ENCODE measurements at regions of chr9 and their contacts with region 1.

Region 1: GRCh38 chr9:34899535-34900158 is 58.4 kb upstream of the PHF24 start:
- DNase-seq: peak; percentile 71 to 80
- H3K4me3 ChIP-seq: no peak overlapping the region
- H3K4me3 Mint-ChIP-seq: no peak overlapping the region
- H3K27ac Mint-ChIP-seq: no peak overlapping the region
- H3K4me1 ChIP-seq: no peaks in the 10 kb centered on the region
- H3K4me1 Mint-ChIP-seq: no peaks in the 10 kb centered on the region
- H3K27me3 ChIP-seq: no peaks in the 10 kb centered on the region; the same call in 1 of the 2 replicates
- H3K27me3 Mint-ChIP-seq: peaks cover 16% of the 10 kb centered on the region
- CTCF ChIP-seq: peak; percentile 81 to 88

Region 2: DNA sequence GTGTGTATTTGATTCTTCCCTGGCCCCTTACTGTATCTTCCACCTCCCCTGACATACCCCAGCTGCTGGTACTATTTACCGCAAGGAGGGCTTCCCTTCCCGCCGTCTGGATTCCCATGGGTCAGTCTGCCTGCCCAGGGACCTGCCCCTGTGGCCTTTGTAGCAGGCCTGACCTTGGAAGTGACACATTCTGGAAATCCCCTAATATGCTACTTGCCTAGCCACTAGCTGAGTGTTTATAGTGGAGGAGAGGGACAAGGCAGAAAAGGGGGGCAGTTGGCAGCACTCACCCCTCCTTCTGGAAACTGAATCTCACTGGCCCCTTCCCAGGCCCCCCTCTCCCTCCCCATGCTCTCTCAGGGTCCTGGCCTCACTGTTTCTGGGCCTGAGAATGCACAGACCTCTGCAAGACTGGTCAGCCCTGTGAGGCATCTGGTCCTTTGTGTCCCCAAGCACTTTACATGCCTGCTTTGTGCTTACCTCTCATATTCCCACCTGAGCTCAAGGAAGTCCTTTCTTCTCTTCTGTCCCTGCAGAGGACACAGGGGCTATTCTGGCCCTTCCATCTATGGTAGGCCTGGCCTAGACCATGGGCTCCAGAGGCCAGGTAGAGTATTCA is 181.5 kb before region 1 on chr9:
- CTCF ChIA-PET with region 1: no interaction called
- POLR2A ChIA-PET with region 1: no interaction called
- intact Hi-C with region 1: no loop called
- DNase-seq: no peak
- H3K4me3 ChIP-seq: no peak overlapping the region
- H3K4me3 Mint-ChIP-seq: no peak overlapping the region
- H3K27ac Mint-ChIP-seq: no peak overlapping the region
- H3K4me1 ChIP-seq: no peaks in the 10 kb centered on the region
- H3K4me1 Mint-ChIP-seq: no peaks in the 10 kb centered on the region
- H3K27me3 ChIP-seq: no peaks in the 10 kb centered on the region; the same call in 1 of the 2 replicates
- H3K27me3 Mint-ChIP-seq: peaks cover 20% of the 10 kb centered on the region
- CTCF ChIP-seq: no peak

Region 3: GRCh38 chr9:34957492-34958410 is 58.1 kb after region 1 on chr9 and contains the start of gene PHF24:
- CTCF ChIA-PET with region 1: interaction called, 3 read pairs
- POLR2A ChIA-PET with region 1: no interaction called
- intact Hi-C with region 1: loop called (anchors 1 kb)
- DNase-seq: peak in 1 of 2 experiments; percentile 30
- H3K4me3 ChIP-seq: peak within 1 kb of the TSS; percentile 30
- H3K4me3 Mint-ChIP-seq: peak within 1 kb of the TSS; percentile 64
- H3K27ac Mint-ChIP-seq: no peak within 1 kb of the TSS
- H3K4me1 ChIP-seq: 0 out of 2 replicates have a peak, but pooled peaks cover 3% of the 10 kb centered on the region
- H3K4me1 Mint-ChIP-seq: no peaks in the 10 kb centered on the region
- H3K27me3 ChIP-seq: peaks cover 3% of the 10 kb centered on the region
- H3K27me3 Mint-ChIP-seq: peaks cover 23% of the 10 kb centered on the region
- CTCF ChIP-seq: no peak
- total RNA-seq, gene PHF24: 0.12 TPM in 1 of 2 replicates, not detected in the other

Region 4: GRCh38 chr9:34989003-34989945 is 89.6 kb after region 1 on chr9 and contains the start of gene DNAJB5:
- CTCF ChIA-PET with region 1: interaction called, 91 read pairs
- POLR2A ChIA-PET with region 1: no interaction called
- intact Hi-C with region 1: loop called (anchors 1 kb)
- DNase-seq: peak; percentile 98 to 99
- H3K4me3 ChIP-seq: peak within 1 kb of the TSS; percentile 85
- H3K4me3 Mint-ChIP-seq: peak within 1 kb of the TSS; percentile 95
- H3K27ac Mint-ChIP-seq: peak within 1 kb of the TSS; percentile 91
- H3K4me1 ChIP-seq: peaks cover 8% of the 10 kb centered on the region
- H3K4me1 Mint-ChIP-seq: peaks cover 9% of the 10 kb centered on the region
- H3K27me3 ChIP-seq: no peaks in the 10 kb centered on the region; the same call in 1 of the 2 replicates
- H3K27me3 Mint-ChIP-seq: peaks cover 2% of the 10 kb centered on the region
- CTCF ChIP-seq: no peak
- total RNA-seq, gene DNAJB5: 3.1 and 3.4 TPM in 2 replicates

Region 5: GRCh38 chr9:34994260-34994899 is 94.7 kb after region 1 on chr9:
- CTCF ChIA-PET with region 1: interaction called, 48 read pairs
- POLR2A ChIA-PET with region 1: no interaction called
- intact Hi-C with region 1: loop called (anchors 1 kb)
- DNase-seq: peak; percentile 53 to 66
- H3K4me3 ChIP-seq: no peak overlapping the region
- H3K4me3 Mint-ChIP-seq: no peak overlapping the region
- H3K27ac Mint-ChIP-seq: no peak overlapping the region
- H3K4me1 ChIP-seq: peaks cover 29% of the 10 kb centered on the region
- H3K4me1 Mint-ChIP-seq: peaks cover 22% of the 10 kb centered on the region
- H3K27me3 ChIP-seq: no peaks in the 10 kb centered on the region
- H3K27me3 Mint-ChIP-seq: no peaks in the 10 kb centered on the region
- CTCF ChIP-seq: peak; percentile 70 to 77

Region 6: GRCh38 chr9:35051069-35051967 is 151.7 kb after region 1 on chr9:
- CTCF ChIA-PET with region 1: interaction called, 76 read pairs
- POLR2A ChIA-PET with region 1: no interaction called
- intact Hi-C with region 1: loop called (anchors 1 kb)
- DNase-seq: peak; percentile 58 to 66
- H3K4me3 ChIP-seq: no peak overlapping the region
- H3K4me3 Mint-ChIP-seq: no peak overlapping the region
- H3K27ac Mint-ChIP-seq: no peak overlapping the region
- H3K4me1 ChIP-seq: no peaks in the 10 kb centered on the region
- H3K4me1 Mint-ChIP-seq: no peaks in the 10 kb centered on the region
- H3K27me3 ChIP-seq: no peaks in the 10 kb centered on the region
- H3K27me3 Mint-ChIP-seq: no peaks in the 10 kb centered on the region
- CTCF ChIP-seq: peak; percentile 74 to 75

Region 7: GRCh38 chr9:35079426-35080341 is 180.0 kb after region 1 on chr9 and contains the start of gene FANCG:
- CTCF ChIA-PET with region 1: interaction called, 10 read pairs
- POLR2A ChIA-PET with region 1: no interaction called
- intact Hi-C with region 1: no loop called
- DNase-seq: peak; percentile 92 to 93
- H3K4me3 ChIP-seq: peak within 1 kb of the TSS; percentile 88
- H3K4me3 Mint-ChIP-seq: peak within 1 kb of the TSS; percentile 86
- H3K27ac Mint-ChIP-seq: peak within 1 kb of the TSS; percentile 87
- H3K4me1 ChIP-seq: peaks cover 10% of the 10 kb centered on the region; the same call in 1 of the 2 replicates
- H3K4me1 Mint-ChIP-seq: peaks cover 7% of the 10 kb centered on the region
- H3K27me3 ChIP-seq: no peaks in the 10 kb centered on the region
- H3K27me3 Mint-ChIP-seq: no peaks in the 10 kb centered on the region
- CTCF ChIP-seq: no peak
- total RNA-seq, gene FANCG: 68.9 and 74.8 TPM in 2 replicates

Region 8: DNA sequence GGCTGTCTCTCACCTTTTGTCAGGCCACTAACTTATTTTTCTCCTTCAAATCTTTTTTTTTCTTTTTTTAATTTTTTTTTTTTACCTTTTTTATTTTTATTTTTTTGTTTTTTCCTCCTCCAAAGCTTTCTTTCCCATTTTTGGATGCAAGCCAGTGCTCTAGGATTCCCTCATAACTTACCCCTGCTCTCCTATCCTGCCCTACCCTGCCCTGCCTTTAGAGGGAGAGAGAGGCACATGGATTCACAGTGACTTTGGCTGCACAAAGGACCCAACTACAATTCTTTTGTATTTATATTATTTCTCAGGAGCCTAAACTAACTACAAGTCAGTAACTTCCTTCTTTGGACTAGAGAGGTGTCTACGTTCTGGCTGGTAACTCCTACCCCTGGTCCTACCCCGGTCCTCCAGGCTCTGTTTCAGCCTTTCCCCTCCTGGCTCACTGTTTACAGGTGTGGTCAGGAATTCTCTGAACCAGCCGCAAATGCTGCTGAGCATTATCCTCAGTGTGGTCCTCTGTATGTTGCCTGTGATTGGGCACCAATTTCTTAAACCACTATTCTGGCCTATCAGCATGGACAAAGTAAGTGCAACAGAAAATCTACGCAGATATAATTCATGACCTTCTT is 581.8 kb after region 1 on chr9:
- CTCF ChIA-PET with region 1: interaction called, 3 read pairs
- POLR2A ChIA-PET with region 1: no interaction called
- intact Hi-C with region 1: loop called (anchors 2 kb)
- DNase-seq: peak; percentile 55 to 62
- H3K4me3 ChIP-seq: no peak overlapping the region
- H3K4me3 Mint-ChIP-seq: no peak overlapping the region
- H3K27ac Mint-ChIP-seq: no peak overlapping the region
- H3K4me1 ChIP-seq: peaks cover 4% of the 10 kb centered on the region; the same call in 1 of the 2 replicates
- H3K4me1 Mint-ChIP-seq: peaks cover 4% of the 10 kb centered on the region
- H3K27me3 ChIP-seq: no peaks in the 10 kb centered on the region
- H3K27me3 Mint-ChIP-seq: no peaks in the 10 kb centered on the region
- CTCF ChIP-seq: peak; percentile 41 to 86

Measured in Caco-2 (cell line).